Activated CD4-positive, alpha-beta T cell treated with anti-CD3 and anti-CD28 coated beads for 36 hours (primary cell): ENCODE measurements at regions of chr15 and their contacts with region 1.

Region 1: GRCh38 chr15:52528991-52529926 is 579 bp upstream of the MYO5A start:
- DNase-seq: peak; percentile 89
- ATAC-seq: peak; percentile 89
- H3K4me3 Mint-ChIP-seq: peak overlapping the region; percentile 73
- H3K27ac Mint-ChIP-seq: peak overlapping the region; percentile 87
- H3K4me1 Mint-ChIP-seq: peaks cover 23% of the 10 kb centered on the region
- H3K27me3 Mint-ChIP-seq: peaks cover 10% of the 10 kb centered on the region

Region 2: DNA sequence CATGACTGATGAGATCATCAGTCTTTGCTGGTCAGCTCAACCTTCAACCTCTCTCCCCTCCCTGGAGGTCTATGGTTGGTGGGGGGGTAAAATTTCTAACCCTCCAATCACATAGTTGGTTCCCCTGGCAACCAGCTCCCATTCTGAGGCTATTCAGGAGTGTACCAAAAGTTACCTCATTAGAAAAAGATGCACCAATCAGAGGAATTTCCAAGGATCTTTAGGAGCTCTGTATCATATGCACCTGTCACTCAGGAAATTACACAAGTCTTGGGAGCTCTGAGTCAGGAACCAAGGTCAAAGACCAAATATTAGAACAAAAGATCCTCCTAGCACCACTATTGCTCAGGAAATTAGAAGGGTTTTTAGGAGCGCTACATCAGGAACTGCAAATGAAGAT is 536.3 kb before region 1 on chr15:
- CTCF ChIA-PET with region 1: no interaction called
- POLR2A ChIA-PET with region 1: no interaction called
- intact Hi-C with region 1: no loop called
- DNase-seq: no peak
- ATAC-seq: no peak
- H3K4me3 Mint-ChIP-seq: no peak overlapping the region
- H3K27ac Mint-ChIP-seq: no peak overlapping the region
- H3K4me1 Mint-ChIP-seq: no peaks in the 10 kb centered on the region
- H3K27me3 Mint-ChIP-seq: no peaks in the 10 kb centered on the region

Region 3: DNA sequence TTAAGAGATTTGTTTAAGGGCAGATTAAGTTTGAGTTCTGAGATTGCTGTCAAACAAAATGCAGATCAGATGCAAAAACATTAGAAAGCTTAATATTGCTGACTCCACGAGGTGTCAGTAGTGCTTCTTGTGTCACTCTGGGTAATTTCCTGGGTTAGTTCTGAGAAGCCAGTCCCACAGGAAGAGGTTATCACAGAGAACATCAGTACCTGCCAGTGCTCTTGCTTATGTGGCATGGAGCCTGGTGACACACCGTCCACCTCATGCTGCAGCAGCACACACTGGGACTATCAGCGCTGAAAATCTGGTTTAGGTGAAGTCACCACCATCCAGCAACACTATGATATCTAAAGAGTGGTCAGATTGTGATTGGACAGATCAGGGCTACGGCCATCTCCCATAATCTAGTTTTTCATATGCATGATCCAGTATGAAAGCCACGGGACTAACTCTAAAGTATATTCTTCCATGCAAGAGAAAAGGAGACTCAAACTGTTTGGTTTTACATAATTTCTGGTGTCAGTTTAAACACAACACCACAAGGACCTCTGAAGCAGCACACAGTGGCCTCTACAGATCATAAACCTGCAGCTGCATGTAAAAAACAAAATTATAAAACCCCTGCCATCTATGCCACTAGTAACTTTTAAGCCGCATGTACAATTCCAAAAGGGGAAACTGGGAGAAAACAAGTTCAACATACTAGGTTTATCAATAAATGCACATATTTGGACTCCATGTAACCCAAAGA is 197.6 kb before region 1 on chr15:
- CTCF ChIA-PET with region 1: no interaction called
- POLR2A ChIA-PET with region 1: no interaction called
- intact Hi-C with region 1: loop called in 1 of 2 experiments (anchors 1 kb)
- DNase-seq: peak; percentile 66
- ATAC-seq: peak; percentile 99
- H3K4me3 Mint-ChIP-seq: no peak overlapping the region
- H3K27ac Mint-ChIP-seq: peak overlapping the region; percentile 28
- H3K4me1 Mint-ChIP-seq: peaks cover 12% of the 10 kb centered on the region
- H3K27me3 Mint-ChIP-seq: no peaks in the 10 kb centered on the region

Region 4: DNA sequence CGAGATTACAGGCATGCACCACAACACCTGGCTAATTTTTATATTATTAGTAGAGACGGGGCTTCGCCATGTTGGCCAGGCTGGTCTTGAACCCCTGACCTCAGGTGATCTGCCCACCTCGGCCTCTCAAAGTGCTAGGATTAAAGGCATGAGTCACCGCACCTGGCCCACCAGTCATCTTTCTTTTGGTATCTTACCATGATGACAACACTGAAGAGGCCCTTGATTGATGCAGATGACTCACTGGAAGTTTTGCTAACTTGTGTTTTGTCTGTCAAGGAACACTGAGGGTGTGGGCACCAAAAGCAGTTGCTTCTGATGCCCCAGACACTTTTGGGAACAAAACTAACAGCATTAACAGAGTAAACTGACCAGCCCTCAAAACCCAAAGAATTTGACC is 88.9 kb before region 1 on chr15:
- CTCF ChIA-PET with region 1: no interaction called
- POLR2A ChIA-PET with region 1: no interaction called
- intact Hi-C with region 1: no loop called
- DNase-seq: peak; percentile 66
- ATAC-seq: peak; percentile 97
- H3K4me3 Mint-ChIP-seq: no peak overlapping the region
- H3K27ac Mint-ChIP-seq: no peak overlapping the region
- H3K4me1 Mint-ChIP-seq: peaks cover 47% of the 10 kb centered on the region
- H3K27me3 Mint-ChIP-seq: no peaks in the 10 kb centered on the region

Region 5: DNA sequence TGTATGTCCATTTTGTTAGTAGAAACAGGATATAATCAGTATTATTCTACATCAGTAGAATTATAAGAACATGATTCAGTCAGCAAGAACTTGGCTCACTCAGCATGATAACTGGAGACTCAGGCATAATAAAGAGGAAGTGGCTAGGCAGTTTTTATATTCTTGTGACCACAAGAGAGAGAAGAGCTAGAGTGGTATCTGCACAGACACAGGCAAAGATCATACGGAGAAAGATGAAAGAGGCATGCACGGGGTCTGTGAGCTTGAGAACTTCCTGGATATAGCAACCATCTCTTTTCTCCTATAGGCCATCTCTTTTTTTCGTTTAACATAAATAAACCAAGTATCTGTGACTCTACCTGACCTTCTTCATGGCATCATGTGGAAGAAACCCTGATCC is 47.3 kb before region 1 on chr15:
- CTCF ChIA-PET with region 1: interaction called, 3 read pairs
- POLR2A ChIA-PET with region 1: no interaction called
- intact Hi-C with region 1: loop called (anchors 2 to 5 kb)
- DNase-seq: peak; percentile 49
- ATAC-seq: peak; percentile 94
- H3K4me3 Mint-ChIP-seq: peak overlapping the region; percentile 0
- H3K27ac Mint-ChIP-seq: peak overlapping the region; percentile 84
- H3K4me1 Mint-ChIP-seq: peaks cover 70% of the 10 kb centered on the region
- H3K27me3 Mint-ChIP-seq: no peaks in the 10 kb centered on the region

Region 6: GRCh38 chr15:52506549-52506948 is 22.7 kb before region 1 on chr15:
- CTCF ChIA-PET with region 1: interaction called, 4 read pairs
- POLR2A ChIA-PET with region 1: interaction called, 3 read pairs
- intact Hi-C with region 1: loop called in 1 of 2 experiments (anchors 2 kb)
- DNase-seq: no peak
- ATAC-seq: no peak
- H3K4me3 Mint-ChIP-seq: no peak overlapping the region
- H3K27ac Mint-ChIP-seq: no peak overlapping the region
- H3K4me1 Mint-ChIP-seq: peaks cover 39% of the 10 kb centered on the region
- H3K27me3 Mint-ChIP-seq: no peaks in the 10 kb centered on the region

Region 7: GRCh38 chr15:52568601-52569256 is 39.5 kb after region 1 on chr15 and contains the start of gene ARPP19:
- CTCF ChIA-PET with region 1: interaction called, 3 read pairs
- POLR2A ChIA-PET with region 1: interaction called, 5 read pairs
- intact Hi-C with region 1: loop called (anchors 1 kb)
- DNase-seq: peak; percentile 90
- ATAC-seq: peak; percentile 83
- H3K4me3 Mint-ChIP-seq: peak within 1 kb of the TSS; percentile 96
- H3K27ac Mint-ChIP-seq: peak within 1 kb of the TSS; percentile 97
- H3K4me1 Mint-ChIP-seq: peaks cover 27% of the 10 kb centered on the region
- H3K27me3 Mint-ChIP-seq: no peaks in the 10 kb centered on the region
- total RNA-seq, gene ARPP19: 141 to 185 TPM

Region 8: DNA sequence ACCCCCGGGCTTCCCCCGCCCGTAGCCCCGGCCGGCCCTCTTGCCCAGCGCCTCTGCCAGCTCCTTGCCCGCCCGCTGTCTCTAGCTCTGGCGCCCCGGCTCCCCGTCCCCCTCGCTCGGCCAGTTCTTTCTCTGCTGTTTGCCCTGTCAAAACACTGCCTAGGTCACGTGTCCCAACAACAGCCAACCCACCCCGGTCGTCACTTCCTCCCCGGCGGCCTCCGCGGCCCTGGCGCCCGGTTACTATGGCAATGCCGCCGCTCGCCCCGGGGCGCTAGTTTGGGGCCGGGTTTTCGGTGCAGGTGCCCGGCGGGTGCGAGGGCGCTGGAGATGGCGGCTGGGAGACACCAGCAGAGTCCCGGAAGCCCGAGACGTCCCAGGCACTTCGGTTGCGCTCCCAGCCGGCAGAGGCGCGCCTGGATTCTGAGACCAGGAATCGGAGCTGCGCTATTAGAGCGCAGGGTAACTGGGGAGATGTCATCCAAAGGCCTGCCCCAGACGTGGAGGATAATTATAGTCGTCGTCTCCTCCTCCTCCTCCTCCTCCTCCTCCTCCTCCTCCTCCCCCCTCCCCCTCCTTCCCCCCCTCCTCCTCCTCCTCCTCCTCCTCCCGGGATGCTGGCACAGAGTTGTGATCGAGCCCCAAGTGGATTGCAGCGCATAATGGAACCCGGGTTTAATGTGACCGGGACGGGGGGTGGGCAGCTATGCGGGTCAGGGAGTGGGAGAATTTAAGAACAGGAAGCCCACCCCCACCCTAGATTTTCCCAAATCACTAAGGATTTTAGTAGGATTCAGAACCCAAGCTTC is 150.2 kb after region 1 on chr15 and contains the start of gene ATOSA:
- CTCF ChIA-PET with region 1: no interaction called
- POLR2A ChIA-PET with region 1: no interaction called
- intact Hi-C with region 1: loop called in 1 of 2 experiments (anchors 1 kb)
- DNase-seq: peak; percentile 95
- ATAC-seq: peak; percentile 85
- H3K4me3 Mint-ChIP-seq: peak within 1 kb of the TSS; percentile 99
- H3K27ac Mint-ChIP-seq: peak within 1 kb of the TSS; percentile 97
- H3K4me1 Mint-ChIP-seq: peaks cover 45% of the 10 kb centered on the region
- H3K27me3 Mint-ChIP-seq: no peaks in the 10 kb centered on the region
- total RNA-seq, gene ATOSA: 13.4 to 13.5 TPM

Region 9: DNA sequence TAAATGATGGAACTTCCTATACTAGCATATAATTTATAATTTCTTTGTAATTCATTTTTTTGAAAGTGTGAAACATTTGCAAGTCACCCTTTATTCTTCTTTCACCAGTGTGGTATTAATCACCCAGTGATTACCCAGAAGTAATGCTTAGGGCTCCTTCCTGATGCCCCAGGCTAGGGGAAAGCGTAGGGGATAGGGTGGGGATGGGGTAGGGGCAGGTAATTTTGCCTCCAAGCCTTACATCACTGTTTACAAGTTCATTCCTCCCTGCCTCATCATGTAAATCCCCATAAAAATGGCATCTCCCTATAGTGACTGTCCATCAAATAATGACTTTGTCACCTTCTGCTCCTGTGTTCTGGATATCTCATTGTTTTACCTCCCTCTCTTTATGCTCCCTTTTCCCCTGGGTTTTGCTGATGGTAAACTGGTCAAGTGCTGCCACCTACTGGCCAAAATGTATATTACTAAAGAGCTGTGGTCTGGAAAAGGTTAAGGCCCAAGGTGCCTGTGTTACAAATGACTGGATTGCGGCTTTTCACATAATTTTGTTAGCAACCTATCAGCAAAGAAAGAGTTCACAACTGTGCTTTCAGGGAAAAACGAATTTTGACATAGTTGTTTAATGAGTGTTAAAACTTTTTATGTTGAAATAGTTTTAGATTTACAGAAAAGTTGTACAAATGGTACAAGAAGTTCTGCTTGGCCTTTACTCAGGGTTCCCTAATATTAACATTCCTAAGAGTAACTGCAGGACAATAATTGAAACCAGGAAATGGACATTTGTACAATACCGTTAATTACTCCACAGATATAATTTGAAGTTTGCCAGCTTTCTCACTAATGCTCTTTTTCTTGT is 206.2 kb after region 1 on chr15:
- CTCF ChIA-PET with region 1: no interaction called
- POLR2A ChIA-PET with region 1: no interaction called
- intact Hi-C with region 1: loop called in 1 of 2 experiments (anchors 1 kb)
- DNase-seq: peak; percentile 77
- ATAC-seq: peak; percentile 91
- H3K4me3 Mint-ChIP-seq: no peak overlapping the region
- H3K27ac Mint-ChIP-seq: no peak overlapping the region
- H3K4me1 Mint-ChIP-seq: peaks cover 5% of the 10 kb centered on the region
- H3K27me3 Mint-ChIP-seq: no peaks in the 10 kb centered on the region